Activated CD8-positive, alpha-beta T cell treated with anti-CD3 and anti-CD28 coated beads, Interleukin-2, amount 10 ng/mL, durations not matched to agents 7 days and 5 days (primary cell): ENCODE measurements at regions of chr19 and their contacts with region 1.

Region 1: GRCh38 chr19:48618916-48619691 is at the starts of genes RPL18 and SPHK2:
- DNase-seq: peak; percentile 97
- ATAC-seq: peak; percentile 83
- H3K4me3 Mint-ChIP-seq: peak within 1 kb of the TSS; percentile 97
- H3K27ac Mint-ChIP-seq: peak within 1 kb of the TSS; percentile 99
- H3K4me1 Mint-ChIP-seq: peaks cover 46% of the 10 kb centered on the region
- H3K27me3 Mint-ChIP-seq: no peaks in the 10 kb centered on the region
- total RNA-seq, gene RPL18: 1,371 to 1,433 TPM
- total RNA-seq, gene SPHK2: 33.0 to 33.1 TPM

Region 2: GRCh38 chr19:48608798-48609263 is 10.3 kb before region 1 on chr19:
- CTCF ChIA-PET with region 1: interaction called, 20 read pairs
- POLR2A ChIA-PET with region 1: interaction called, 11 read pairs
- DNase-seq: peak; percentile 71
- ATAC-seq: peak; percentile 79
- H3K4me3 Mint-ChIP-seq: no peak overlapping the region
- H3K27ac Mint-ChIP-seq: peak overlapping the region; percentile 46
- H3K4me1 Mint-ChIP-seq: peaks cover 4% of the 10 kb centered on the region
- H3K27me3 Mint-ChIP-seq: no peaks in the 10 kb centered on the region

Region 3: GRCh38 chr19:48630296-48631063 is 11.4 kb after region 1 on chr19:
- CTCF ChIA-PET with region 1: interaction called, 7 read pairs
- POLR2A ChIA-PET with region 1: interaction called, 15 read pairs
- DNase-seq: no peak
- ATAC-seq: no peak
- H3K4me3 Mint-ChIP-seq: no peak overlapping the region
- H3K27ac Mint-ChIP-seq: no peak overlapping the region
- H3K4me1 Mint-ChIP-seq: peaks cover 52% of the 10 kb centered on the region
- H3K27me3 Mint-ChIP-seq: no peaks in the 10 kb centered on the region

Region 4: DNA sequence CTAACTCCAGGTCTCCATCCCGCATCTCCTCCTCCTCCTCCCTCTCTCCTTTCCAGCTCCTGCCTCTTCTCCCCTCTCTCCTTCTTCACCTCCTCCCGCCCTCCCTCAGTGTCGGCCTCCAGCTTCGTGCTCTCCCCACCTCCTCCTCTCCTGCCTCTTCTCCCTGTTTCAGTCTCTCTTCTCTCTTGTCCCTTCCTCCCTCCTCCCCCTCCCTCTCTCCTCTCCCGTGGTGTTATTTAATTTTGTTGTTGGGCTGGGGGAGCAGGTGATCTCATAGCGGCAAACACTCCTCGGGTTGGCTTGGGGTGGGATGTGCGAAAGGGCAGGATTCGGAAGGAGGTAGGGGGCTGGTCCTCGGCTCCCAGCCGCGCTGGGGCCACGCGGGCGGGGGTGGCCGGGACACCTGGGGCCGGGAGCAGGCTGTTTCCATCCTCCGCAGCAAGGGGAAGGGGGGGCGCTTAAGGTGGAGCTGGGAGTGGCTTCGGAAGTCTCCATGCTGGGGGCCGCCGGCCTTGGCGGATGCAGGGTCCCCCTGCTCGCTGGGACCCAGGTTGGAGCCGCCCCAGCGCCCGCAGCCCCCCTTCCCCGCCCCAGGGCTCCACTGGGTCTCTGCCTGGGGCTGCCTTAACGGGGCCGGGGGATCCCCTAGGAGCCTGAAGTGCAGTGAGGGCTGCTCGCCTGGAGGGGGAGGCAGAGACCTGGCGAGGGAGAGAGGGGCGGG is 27.1 kb after region 1 on chr19 and contains the start of gene CA11:
- CTCF ChIA-PET with region 1: interaction called, 4 read pairs
- POLR2A ChIA-PET with region 1: interaction called, 12 read pairs
- DNase-seq: peak; percentile 93
- ATAC-seq: peak; percentile 90
- H3K4me3 Mint-ChIP-seq: peak within 1 kb of the TSS; percentile 79
- H3K27ac Mint-ChIP-seq: peak within 1 kb of the TSS; percentile 76
- H3K4me1 Mint-ChIP-seq: peaks cover 46% of the 10 kb centered on the region
- H3K27me3 Mint-ChIP-seq: no peaks in the 10 kb centered on the region
- total RNA-seq, gene CA11: 5.2 to 6.3 TPM

Region 5: DNA sequence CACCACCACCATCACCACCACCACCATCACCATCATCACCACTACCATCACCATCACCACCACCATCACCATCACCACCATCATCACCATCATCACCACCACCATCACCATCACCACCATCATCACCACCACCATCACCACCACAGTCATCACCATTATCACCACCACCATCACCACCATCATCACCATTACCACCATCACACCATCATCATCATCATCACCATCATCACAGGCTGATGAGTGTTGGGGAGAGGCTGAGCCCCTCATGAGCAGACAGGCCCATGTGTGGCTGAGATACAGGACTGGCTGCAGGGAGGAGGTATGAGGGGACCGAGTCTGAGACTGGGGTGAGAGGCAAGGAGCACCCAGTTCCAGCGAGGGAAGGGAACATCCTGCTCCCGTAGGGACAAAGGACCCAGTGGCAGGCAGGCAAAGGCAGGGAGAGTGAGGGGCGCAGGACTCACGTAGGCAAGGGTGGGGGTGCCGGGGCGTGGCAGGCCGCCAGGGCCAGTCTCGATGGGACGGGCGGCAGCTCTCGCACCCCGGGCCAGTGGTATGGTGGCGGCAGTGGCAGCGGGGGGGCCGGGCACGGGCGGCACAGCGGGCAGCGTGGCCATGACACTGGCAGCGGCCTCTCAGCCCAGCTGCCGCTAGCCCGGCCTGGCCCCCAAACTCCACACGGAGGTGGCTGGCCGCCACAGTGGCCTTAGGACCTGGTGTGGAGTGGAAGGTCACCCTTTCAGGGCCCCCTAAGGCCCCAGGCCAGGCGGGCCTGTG is 51.0 kb after region 1 on chr19:
- CTCF ChIA-PET with region 1: no interaction called
- POLR2A ChIA-PET with region 1: no interaction called
- DNase-seq: no peak
- ATAC-seq: no peak
- H3K4me3 Mint-ChIP-seq: no peak overlapping the region
- H3K27ac Mint-ChIP-seq: peak overlapping the region; percentile 83
- H3K4me1 Mint-ChIP-seq: peaks cover 1% of the 10 kb centered on the region
- H3K27me3 Mint-ChIP-seq: peaks cover 2% of the 10 kb centered on the region